ENCODE measurements at regions of chr4 and their contacts with region 1.

Region 1: GRCh38 chr4:183504064-183504929 is 561 bp upstream of the ING2 start:
- DNase-seq: peak; percentile 98
- H3K4me3 Mint-ChIP-seq: peak overlapping the region; percentile 85
- H3K27ac Mint-ChIP-seq: peak overlapping the region; percentile 43
- H3K4me1 Mint-ChIP-seq: peaks cover 11% of the 10 kb centered on the region
- H3K27me3 Mint-ChIP-seq: no peaks in the 10 kb centered on the region
- CTCF ChIP-seq: peak; percentile 24

Region 2: DNA sequence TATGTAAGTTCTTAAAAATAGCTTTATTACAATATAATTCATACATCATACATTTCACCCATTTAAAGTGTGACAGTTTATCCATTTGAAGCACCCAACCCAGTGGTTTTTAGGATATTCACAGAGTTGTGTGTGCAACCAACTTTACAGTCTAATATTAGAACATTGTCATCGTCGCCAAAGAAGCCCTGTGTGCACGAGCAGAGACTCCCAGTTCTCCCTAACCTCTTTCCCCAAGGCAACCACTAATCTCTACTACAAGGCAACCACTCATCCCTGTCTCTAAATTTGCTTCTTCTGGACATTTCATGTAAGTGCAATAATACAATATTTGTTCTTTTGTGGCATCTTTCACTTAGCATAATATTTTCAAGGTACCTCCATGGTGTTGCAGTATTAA is 231.9 kb before region 1 on chr4:
- CTCF ChIA-PET with region 1: no interaction called
- POLR2A ChIA-PET with region 1: no interaction called
- intact Hi-C with region 1: no loop called
- DNase-seq: no peak
- H3K4me3 Mint-ChIP-seq: no peak overlapping the region
- H3K27ac Mint-ChIP-seq: no peak overlapping the region
- H3K4me1 Mint-ChIP-seq: no peaks in the 10 kb centered on the region
- H3K27me3 Mint-ChIP-seq: no peaks in the 10 kb centered on the region
- CTCF ChIP-seq: no peak

Region 3: DNA sequence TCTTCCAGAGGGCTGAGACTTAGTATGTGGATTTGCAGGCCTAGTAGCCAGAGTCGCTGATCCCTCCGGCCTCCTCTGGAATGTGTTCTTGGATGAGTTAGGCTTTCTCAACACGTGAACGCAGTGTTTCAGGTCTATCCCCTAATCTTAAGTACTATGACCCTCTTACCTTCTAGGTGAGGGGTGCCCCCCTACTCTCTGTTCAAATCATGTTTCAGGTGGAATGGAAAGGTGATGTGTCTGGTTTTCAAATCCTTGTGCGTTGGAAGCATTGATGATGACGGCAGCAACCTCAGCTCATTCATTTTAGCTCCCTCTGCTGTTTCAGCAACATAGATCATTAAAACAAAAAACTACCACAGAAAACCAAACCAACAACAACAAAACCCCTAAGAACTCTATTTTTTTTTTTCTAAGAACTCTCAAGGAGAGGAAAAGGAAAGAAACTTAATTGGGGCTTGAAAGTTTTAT is 98.3 kb after region 1 on chr4:
- CTCF ChIA-PET with region 1: interaction called, 4 read pairs
- POLR2A ChIA-PET with region 1: interaction called, 14 read pairs
- intact Hi-C with region 1: loop called (anchors 2 kb)
- DNase-seq: peak; percentile 30
- H3K4me3 Mint-ChIP-seq: no peak overlapping the region
- H3K27ac Mint-ChIP-seq: no peak overlapping the region
- H3K4me1 Mint-ChIP-seq: no peaks in the 10 kb centered on the region
- H3K27me3 Mint-ChIP-seq: no peaks in the 10 kb centered on the region
- CTCF ChIP-seq: peak; percentile 22

Region 4: GRCh38 chr4:183636923-183637322 is 132.6 kb after region 1 on chr4:
- CTCF ChIA-PET with region 1: no interaction called
- POLR2A ChIA-PET with region 1: interaction called, 7 read pairs
- intact Hi-C with region 1: loop called (anchors 5 kb)
- DNase-seq: peak; percentile 67
- H3K4me3 Mint-ChIP-seq: peak overlapping the region; percentile 48
- H3K27ac Mint-ChIP-seq: peak overlapping the region; percentile 3
- H3K4me1 Mint-ChIP-seq: peaks cover 14% of the 10 kb centered on the region
- H3K27me3 Mint-ChIP-seq: no peaks in the 10 kb centered on the region
- CTCF ChIP-seq: no peak

Region 5: DNA sequence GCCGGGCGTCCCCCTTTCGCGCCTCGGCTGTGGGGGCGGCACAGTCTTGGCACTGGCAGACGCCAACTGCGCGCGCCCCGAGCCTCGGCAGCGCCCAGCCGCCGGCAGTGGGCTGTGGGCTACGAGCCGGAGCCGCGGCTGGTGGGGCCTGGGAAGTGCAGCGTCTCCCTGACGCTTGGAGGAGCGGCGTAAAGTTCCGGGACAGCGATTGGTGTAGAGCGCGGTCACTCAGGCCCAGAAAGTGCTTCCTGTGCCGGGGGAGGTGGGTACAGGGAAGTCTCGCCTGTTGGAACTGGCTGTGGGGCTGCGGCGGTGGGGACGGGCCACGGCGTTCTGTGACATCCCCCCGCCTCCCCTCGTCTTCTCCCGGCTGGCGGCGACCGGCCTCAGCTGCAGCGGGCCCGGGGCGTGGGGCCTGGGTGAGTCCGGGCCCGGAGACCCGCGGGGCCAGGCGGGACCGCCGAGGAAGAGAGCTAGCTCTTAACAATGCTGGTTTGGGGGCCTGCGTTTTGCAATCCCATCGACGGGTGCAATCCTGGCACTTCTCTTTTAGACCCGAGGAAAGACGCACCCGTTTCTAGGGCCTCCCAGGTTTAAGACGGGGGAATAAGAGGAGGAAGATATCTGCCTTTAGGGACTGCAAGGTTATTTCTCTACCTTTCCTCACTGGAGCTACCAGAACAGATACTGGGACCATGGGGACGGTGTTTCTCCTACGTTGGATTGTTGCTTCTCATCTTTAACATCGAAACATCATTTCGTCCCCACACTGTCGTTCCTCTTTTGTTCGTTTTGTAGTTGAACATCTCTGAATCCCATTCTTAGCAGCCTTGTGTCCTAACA is 155.0 kb after region 1 on chr4 and contains the starts of genes RWDD4 and TRAPPC11:
- CTCF ChIA-PET with region 1: interaction called, 3 read pairs
- POLR2A ChIA-PET with region 1: interaction called, 37 read pairs
- intact Hi-C with region 1: loop called (anchors 1 kb)
- DNase-seq: peak; percentile 98
- H3K4me3 Mint-ChIP-seq: peak within 1 kb of the TSS; percentile 85
- H3K27ac Mint-ChIP-seq: peak within 1 kb of the TSS; percentile 82
- H3K4me1 Mint-ChIP-seq: peaks cover 22% of the 10 kb centered on the region
- H3K27me3 Mint-ChIP-seq: no peaks in the 10 kb centered on the region
- CTCF ChIP-seq: peak; percentile 13
- total RNA-seq, gene RWDD4: 23.0 and 26.1 TPM in 2 replicates
- total RNA-seq, gene TRAPPC11: 29.4 and 35.0 TPM in 2 replicates